Right ventricle myocardium inferior (tissue), 1 donor: ENCODE measurements at regions of chr3 and their contacts with region 1.

Region 1: GRCh38 chr3:177050501-177051237 is 146.6 kb downstream of the TBL1XR1 start:
- DNase-seq: no peak
- ATAC-seq: peak; percentile 70

Region 2: GRCh38 chr3:177251755-177252154 is 201.1 kb after region 1 on chr3:
- intact Hi-C with region 1: no loop called
- DNase-seq: no peak
- ATAC-seq: no peak

Region 3: DNA sequence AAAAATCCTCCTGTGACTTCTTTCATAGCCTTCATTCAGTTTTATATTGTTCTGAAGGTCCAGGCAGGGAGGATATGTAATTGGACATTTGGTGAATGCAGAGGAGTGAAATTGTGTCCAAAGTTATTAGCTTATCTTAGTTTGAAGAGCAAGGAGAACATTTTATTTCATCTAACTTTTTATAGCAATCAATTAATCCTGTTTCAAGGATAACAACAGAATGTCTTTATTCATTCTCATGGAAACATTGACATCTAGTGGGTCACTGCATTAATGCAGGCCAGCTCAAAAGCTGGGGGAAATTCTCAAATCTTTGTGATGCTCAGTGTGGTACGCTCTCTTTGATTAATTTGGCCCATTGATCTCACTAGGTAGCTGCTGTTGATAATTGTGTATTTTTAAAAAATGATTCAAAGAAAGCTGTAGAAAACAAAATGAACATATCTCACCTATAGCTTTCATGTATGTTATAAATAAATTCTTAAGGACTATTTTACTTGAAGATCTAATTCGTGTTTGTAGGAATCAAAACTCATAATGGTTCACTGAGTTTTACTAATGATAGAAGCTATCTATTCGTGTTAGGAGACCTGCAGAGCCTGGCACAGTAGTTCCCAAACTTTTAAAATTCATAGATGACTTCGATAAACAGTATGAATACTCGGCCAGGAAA is 1334.7 kb after region 1 on chr3:
- intact Hi-C with region 1: loop called (anchors 5 kb)
- DNase-seq: no peak
- ATAC-seq: peak; percentile 86